ENCODE measurements at regions of chr4 and their contacts with region 1.

Region 1: DNA sequence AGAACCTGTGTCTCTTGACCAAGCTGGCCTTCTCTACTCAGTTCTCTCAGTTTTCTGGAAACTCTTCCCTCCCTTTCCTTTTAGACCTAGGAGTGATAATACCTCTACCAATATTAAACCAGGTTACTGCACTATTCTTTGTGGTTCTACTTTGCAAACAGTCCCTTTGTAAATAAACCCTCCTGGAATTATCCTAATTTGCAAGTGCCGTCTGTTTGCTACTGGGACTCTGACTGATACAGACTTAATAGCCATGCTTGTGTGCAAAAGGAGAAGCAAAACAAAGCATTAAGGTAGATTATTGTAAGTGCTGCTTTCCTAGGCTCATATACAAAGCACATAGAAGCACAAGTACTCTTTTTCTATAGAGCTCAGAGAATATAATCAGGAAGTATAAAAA is 507.0 kb downstream of the INPP4B start:
- DNase-seq: no peak
- H3K4me3 ChIP-seq: no peak overlapping the region
- H3K27ac ChIP-seq: no peak overlapping the region
- H3K4me1 ChIP-seq: no peaks in the 10 kb centered on the region
- H3K27me3 ChIP-seq: no peaks in the 10 kb centered on the region
- CTCF ChIP-seq: no peak
- EP300 ChIP-seq: no peak
- POLR2A ChIP-seq: no peak
- RAD21 ChIP-seq: no peak

Region 2: DNA sequence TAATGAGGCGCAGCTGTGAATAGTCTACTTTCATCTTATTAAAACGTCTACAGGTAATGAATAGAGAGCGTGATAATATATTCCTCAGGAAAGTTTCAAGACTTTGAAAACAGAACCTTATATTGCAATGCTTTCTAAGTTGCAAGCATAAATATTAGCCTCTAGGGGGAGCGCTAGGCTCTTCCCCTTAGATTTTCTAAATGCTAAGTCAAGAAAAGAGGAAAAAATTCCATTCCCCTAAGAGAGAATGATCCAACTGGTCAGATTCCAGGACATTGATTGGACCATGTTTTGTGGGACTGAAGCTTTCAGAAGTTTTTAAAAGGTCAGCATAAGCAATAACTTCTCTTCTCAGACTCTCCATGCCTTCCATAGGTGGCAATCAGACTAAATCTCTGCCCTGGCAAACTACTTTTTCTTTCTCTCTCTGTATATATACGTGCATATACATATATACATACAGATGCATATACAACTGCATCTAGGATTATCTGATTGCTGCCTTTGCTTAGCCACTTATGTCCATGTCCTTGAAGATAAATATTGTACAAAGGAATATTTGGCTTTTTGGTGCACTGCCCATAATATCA is 14.2 kb after region 1 on chr4:
- CTCF ChIA-PET with region 1: interaction called, 23 read pairs
- POLR2A ChIA-PET with region 1: no interaction called
- DNase-seq: no peak
- H3K4me3 ChIP-seq: no peak overlapping the region
- H3K27ac ChIP-seq: no peak overlapping the region
- H3K4me1 ChIP-seq: no peaks in the 10 kb centered on the region
- H3K27me3 ChIP-seq: no peaks in the 10 kb centered on the region
- CTCF ChIP-seq: peak in 2 of 3 experiments; percentile 48 to 71; a peak in 2 of 4 replicates
- EP300 ChIP-seq: no peak
- POLR2A ChIP-seq: no peak
- RAD21 ChIP-seq: peak; percentile 79 to 83

Region 3: DNA sequence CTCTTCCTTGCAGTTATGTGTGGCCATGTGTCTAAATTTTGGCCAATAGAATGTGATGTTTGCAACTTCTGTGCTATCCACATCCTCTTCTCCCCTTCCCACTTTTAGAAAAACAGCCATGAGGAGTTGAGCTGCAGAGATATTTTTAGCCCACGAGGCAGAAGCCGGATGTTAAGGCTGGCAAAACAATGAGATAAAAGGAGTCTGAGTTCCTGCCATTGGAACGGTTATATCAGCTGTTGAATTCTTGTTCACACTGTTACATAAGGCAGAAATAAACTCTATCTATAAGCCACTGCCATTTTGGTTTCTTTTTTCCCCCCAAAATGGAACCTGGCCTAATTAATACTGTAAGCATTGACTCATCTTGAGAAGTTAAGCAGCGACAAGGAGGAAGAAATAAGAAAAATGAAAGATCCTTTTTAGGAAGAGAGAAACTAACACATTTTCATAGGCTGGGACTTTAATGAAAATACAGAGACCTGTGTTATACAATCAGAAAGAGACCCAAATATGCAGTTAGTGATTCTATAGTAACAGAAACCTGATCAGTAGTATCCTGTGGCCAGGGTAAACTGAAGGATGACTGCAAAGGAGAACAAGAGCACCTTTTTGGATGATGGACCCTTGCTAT is 306.5 kb after region 1 on chr4:
- CTCF ChIA-PET with region 1: no interaction called
- POLR2A ChIA-PET with region 1: no interaction called
- DNase-seq: no peak
- H3K4me3 ChIP-seq: no peak overlapping the region
- H3K27ac ChIP-seq: no peak overlapping the region
- H3K4me1 ChIP-seq: no peaks in the 10 kb centered on the region
- H3K27me3 ChIP-seq: no peaks in the 10 kb centered on the region
- CTCF ChIP-seq: no peak
- EP300 ChIP-seq: no peak
- POLR2A ChIP-seq: no peak
- RAD21 ChIP-seq: no peak

Measured in H1 (cell line).